ENCODE measurements at regions of chr11 and their contacts with region 1.

Region 1: GRCh38 chr11:73177778-73178577 is 35.9 kb upstream of the FCHSD2 start:
- DNase-seq: peak; percentile 66 to 94
- H3K4me3 ChIP-seq: peak overlapping the region in 1 of 2 donors; percentile 15
- H3K27ac ChIP-seq: peak overlapping the region; percentile 91 to 94
- H3K4me1 ChIP-seq: peaks cover 16 to 36% of the 10 kb centered on the region in 2 donors
- H3K27me3 ChIP-seq: no peaks in the 10 kb centered on the region
- CTCF ChIP-seq: peak; percentile 78 to 94 (median 93)

Region 2: DNA sequence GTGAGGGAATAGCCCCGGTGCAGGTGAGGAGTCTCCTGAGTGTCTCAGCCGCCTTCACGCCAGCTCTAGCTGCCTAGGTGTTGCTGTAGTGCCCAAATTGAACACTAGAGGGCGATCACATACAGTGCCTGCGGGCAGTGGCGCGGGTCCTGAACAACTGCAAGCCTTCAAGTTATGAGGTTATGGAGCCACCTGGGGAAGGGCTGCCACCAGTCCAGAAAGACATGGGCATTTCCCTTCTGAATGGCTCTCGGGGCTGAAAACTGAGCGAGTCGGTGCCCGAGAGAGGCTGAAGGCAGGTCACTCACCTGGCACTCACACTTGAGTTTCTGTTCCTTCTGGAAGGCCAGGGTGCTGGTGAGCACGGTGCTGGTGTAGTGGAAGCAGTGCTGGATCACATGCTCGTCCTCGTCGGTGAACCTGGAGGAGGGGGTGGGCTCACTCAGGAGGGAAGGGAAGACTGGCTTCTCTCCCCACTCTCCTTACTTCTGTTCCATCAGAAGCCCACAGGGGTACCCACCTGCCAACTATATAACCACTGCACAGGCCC is 592.1 kb before region 1 on chr11:
- intact Hi-C with region 1: loop called (anchors 5 kb)
- DNase-seq: peak in 1 of 2 donors; percentile 84
- H3K4me3 ChIP-seq: no peak overlapping the region
- H3K27ac ChIP-seq: no peak overlapping the region
- H3K4me1 ChIP-seq: peaks cover 7 to 16% of the 10 kb centered on the region in 2 donors
- H3K27me3 ChIP-seq: peaks cover 16% of the 10 kb centered on the region
- CTCF ChIP-seq: peak; percentile 89 to 95 (median 91)

Region 3: GRCh38 chr11:72821883-72822799 is 355.8 kb before region 1 on chr11:
- intact Hi-C with region 1: loop called (anchors 2 kb)
- DNase-seq: peak in 1 of 2 donors; percentile 93
- H3K4me3 ChIP-seq: peak overlapping the region; percentile 65 to 67
- H3K27ac ChIP-seq: peak overlapping the region; percentile 75 to 78
- H3K4me1 ChIP-seq: peaks cover 6 to 8% of the 10 kb centered on the region in 2 donors
- H3K27me3 ChIP-seq: no peaks in the 10 kb centered on the region
- CTCF ChIP-seq: peak; percentile 15 to 50 (median 37)

Region 4: DNA sequence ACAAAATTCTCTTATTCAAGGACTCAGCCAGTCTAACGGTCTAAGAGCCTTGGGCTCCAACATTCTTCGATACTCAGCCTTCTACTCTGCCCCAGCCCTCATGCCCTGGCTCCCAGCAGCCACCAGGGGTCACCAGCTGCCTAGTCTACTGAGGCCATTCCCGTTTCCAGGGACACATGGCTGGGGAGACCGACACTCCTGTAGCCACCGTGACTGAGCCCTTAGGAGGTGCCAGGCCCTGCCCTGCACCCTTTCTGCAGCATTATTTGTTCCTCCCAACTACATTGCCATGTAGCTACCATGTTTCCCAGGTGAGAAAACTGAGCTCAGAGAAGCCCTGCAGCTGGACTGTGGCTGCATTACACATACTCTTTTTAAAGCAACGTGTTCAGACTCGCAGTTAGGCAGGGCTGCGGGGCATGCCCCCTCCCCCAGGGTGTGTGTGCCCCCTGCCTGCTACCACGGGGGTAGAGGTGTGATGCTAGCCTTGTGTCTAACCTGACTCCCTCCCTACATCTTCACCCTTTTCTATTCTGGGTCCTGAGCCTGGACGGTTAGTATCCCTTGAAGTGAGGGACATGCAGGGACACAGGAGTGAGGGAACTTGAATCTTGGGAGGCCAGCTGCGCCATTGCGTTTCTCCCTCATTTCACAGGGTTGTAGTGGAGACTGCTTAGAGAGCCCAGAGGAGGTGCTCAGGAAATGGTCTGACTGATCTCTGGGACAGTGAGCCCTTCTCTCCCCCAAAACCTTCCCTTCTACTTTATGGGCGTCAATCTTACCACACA is 346.3 kb before region 1 on chr11:
- intact Hi-C with region 1: loop called (anchors 1 kb)
- DNase-seq: peak in 1 of 2 donors; percentile 94
- H3K4me3 ChIP-seq: no peak overlapping the region
- H3K27ac ChIP-seq: peak overlapping the region; percentile 97 to 99
- H3K4me1 ChIP-seq: peaks cover 23 to 50% of the 10 kb centered on the region in 2 donors
- H3K27me3 ChIP-seq: no peaks in the 10 kb centered on the region
- CTCF ChIP-seq: peak; percentile 93 to 98 (median 93)

Region 5: GRCh38 chr11:72924568-72925190 is 253.3 kb before region 1 on chr11:
- intact Hi-C with region 1: loop called (anchors 5 kb)
- DNase-seq: no peak
- H3K4me3 ChIP-seq: no peak overlapping the region
- H3K27ac ChIP-seq: no peak overlapping the region
- H3K4me1 ChIP-seq: peaks cover 0 to 13% of the 10 kb centered on the region in 2 donors
- H3K27me3 ChIP-seq: no peaks in the 10 kb centered on the region
- CTCF ChIP-seq: peak; percentile 31 to 54 (median 37)

Region 6: GRCh38 chr11:73099512-73100266 is 78.3 kb before region 1 on chr11:
- intact Hi-C with region 1: no loop called
- DNase-seq: no peak
- H3K4me3 ChIP-seq: no peak overlapping the region
- H3K27ac ChIP-seq: no peak overlapping the region
- H3K4me1 ChIP-seq: peaks cover 0 to 14% of the 10 kb centered on the region in 2 donors
- H3K27me3 ChIP-seq: no peaks in the 10 kb centered on the region
- CTCF ChIP-seq: no peak

Region 7: GRCh38 chr11:73141848-73142286 is 36.1 kb before region 1 on chr11:
- intact Hi-C with region 1: loop called (anchors 1 kb)
- DNase-seq: peak; percentile 26 to 86
- H3K4me3 ChIP-seq: peak overlapping the region; percentile 98 to 99
- H3K27ac ChIP-seq: peak overlapping the region; percentile 99 to 100
- H3K4me1 ChIP-seq: peaks cover 8 to 23% of the 10 kb centered on the region in 2 donors
- H3K27me3 ChIP-seq: no peaks in the 10 kb centered on the region
- CTCF ChIP-seq: no peak

Region 8: GRCh38 chr11:73157053-73158010 is 20.6 kb before region 1 on chr11:
- intact Hi-C with region 1: loop called (anchors 2 kb)
- DNase-seq: peak; percentile 29 to 92
- H3K4me3 ChIP-seq: no peak overlapping the region
- H3K27ac ChIP-seq: peak overlapping the region; percentile 82 to 87
- H3K4me1 ChIP-seq: peaks cover 16 to 38% of the 10 kb centered on the region in 2 donors
- H3K27me3 ChIP-seq: no peaks in the 10 kb centered on the region
- CTCF ChIP-seq: no peak

Region 9: GRCh38 chr11:73167363-73167954 is 10.5 kb before region 1 on chr11:
- intact Hi-C with region 1: no loop called
- DNase-seq: no peak
- H3K4me3 ChIP-seq: no peak overlapping the region
- H3K27ac ChIP-seq: no peak overlapping the region
- H3K4me1 ChIP-seq: no peaks in the 10 kb centered on the region
- H3K27me3 ChIP-seq: no peaks in the 10 kb centered on the region
- CTCF ChIP-seq: no peak